Activated T-helper 2 cell treated with anti-CD3 and anti-CD28 coated beads, Interferon-gamma antibody, Interleukin-2, Interleukin-4, amounts not matched to agents 10 μg/mL and 5 μg/mL and 100 μg/mL, durations not matched to agents 14 hours and 24 hours and 36 hours (primary cell): ENCODE measurements at regions of chr17 and their contacts with region 1.

Region 1: GRCh38 chr17:14203388-14203787 is 33.3 kb downstream of the CDRT15 start:
- DNase-seq: peak; percentile 24
- H3K4me3 Mint-ChIP-seq: peak overlapping the region; percentile 35
- H3K27ac Mint-ChIP-seq: peak overlapping the region; percentile 83
- H3K4me1 Mint-ChIP-seq: peaks cover 80% of the 10 kb centered on the region
- H3K27me3 Mint-ChIP-seq: no peaks in the 10 kb centered on the region

Region 2: DNA sequence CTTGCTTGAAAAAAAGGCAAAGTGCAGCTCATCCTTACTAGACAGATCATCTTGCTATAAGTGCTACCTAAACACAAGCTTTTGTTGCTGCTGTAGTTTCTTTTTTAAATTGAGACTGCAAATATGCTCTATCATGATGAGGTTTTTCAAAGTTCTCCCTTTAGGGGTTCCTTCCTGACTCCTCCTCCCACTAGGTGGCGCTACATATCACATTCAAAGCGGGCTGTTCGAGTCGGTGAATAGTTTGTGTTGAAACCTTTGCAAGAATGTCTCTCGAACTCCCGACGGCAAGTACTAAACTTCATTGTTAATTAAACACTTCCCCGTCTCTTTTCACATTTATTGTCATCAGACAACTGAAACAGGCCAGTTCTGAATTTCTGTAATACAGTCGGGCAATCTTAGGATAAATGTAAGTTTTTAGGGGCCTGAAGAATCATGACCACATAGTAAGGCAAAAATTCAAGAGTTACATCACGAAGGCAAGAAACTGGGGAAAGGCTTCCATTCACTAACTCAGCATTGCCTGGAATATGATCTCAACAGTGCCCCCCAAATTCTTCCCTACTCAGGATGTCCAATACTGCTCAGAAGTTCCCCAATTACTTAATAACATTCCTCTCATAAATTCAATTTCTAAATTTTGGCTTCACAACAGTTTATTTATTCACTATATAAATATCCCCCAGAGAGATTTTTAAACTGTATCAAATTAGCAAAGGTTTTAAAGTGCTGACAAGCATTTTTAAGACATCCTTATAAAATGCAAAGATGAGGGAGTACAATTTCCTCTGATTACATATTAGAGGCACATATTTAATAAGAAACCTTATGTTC is 608.4 kb before region 1 on chr17:
- intact Hi-C with region 1: loop called (anchors 5 kb)
- DNase-seq: peak; percentile 66
- H3K4me3 Mint-ChIP-seq: no peak overlapping the region
- H3K27ac Mint-ChIP-seq: no peak overlapping the region
- H3K4me1 Mint-ChIP-seq: peaks cover 8% of the 10 kb centered on the region
- H3K27me3 Mint-ChIP-seq: peaks cover 52% of the 10 kb centered on the region

Region 3: GRCh38 chr17:14042411-14042810 is 161.0 kb before region 1 on chr17:
- intact Hi-C with region 1: loop called (anchors 1 kb)
- DNase-seq: no peak
- H3K4me3 Mint-ChIP-seq: no peak overlapping the region
- H3K27ac Mint-ChIP-seq: no peak overlapping the region
- H3K4me1 Mint-ChIP-seq: peaks cover 50% of the 10 kb centered on the region
- H3K27me3 Mint-ChIP-seq: no peaks in the 10 kb centered on the region

Region 4: GRCh38 chr17:14069251-14070021 is 134.0 kb before region 1 on chr17 and contains the start of gene COX10:
- intact Hi-C with region 1: loop called (anchors 2 kb)
- DNase-seq: peak; percentile 80
- H3K4me3 Mint-ChIP-seq: peak within 1 kb of the TSS; percentile 96
- H3K27ac Mint-ChIP-seq: peak within 1 kb of the TSS; percentile 94
- H3K4me1 Mint-ChIP-seq: peaks cover 45% of the 10 kb centered on the region
- H3K27me3 Mint-ChIP-seq: no peaks in the 10 kb centered on the region
- total RNA-seq, gene COX10: 24.9 and 28.1 TPM in 2 replicates

Region 5: DNA sequence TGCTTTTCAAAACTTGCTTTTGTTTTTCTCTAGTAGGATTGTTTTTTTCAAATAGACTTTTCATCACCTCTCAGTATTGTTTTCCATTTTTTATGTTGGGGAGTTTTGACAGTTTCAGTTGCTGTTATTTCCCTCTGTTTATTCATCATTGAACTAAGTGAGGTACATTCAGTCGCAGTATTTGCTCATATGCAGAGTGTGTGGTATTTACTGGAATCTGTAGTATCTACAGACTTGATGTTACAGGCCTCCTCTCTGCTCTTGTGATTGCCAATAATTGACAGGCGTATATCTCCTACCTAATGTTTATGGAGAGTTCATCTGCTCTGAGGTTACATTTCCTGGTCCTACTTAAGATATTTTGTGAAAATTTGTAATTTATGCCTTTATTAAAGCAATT is 84.4 kb before region 1 on chr17:
- intact Hi-C with region 1: loop called (anchors 1 kb)
- DNase-seq: no peak
- H3K4me3 Mint-ChIP-seq: peak overlapping the region; percentile 59
- H3K27ac Mint-ChIP-seq: peak overlapping the region; percentile 92
- H3K4me1 Mint-ChIP-seq: peaks cover 78% of the 10 kb centered on the region
- H3K27me3 Mint-ChIP-seq: no peaks in the 10 kb centered on the region

Region 6: GRCh38 chr17:14156689-14157088 is 46.7 kb before region 1 on chr17:
- intact Hi-C with region 1: no loop called
- DNase-seq: no peak
- H3K4me3 Mint-ChIP-seq: no peak overlapping the region
- H3K27ac Mint-ChIP-seq: no peak overlapping the region
- H3K4me1 Mint-ChIP-seq: peaks cover 27% of the 10 kb centered on the region
- H3K27me3 Mint-ChIP-seq: no peaks in the 10 kb centered on the region

Region 7: GRCh38 chr17:14276535-14277250 is 73.3 kb after region 1 on chr17:
- intact Hi-C with region 1: no loop called
- DNase-seq: no peak
- H3K4me3 Mint-ChIP-seq: no peak overlapping the region
- H3K27ac Mint-ChIP-seq: no peak overlapping the region
- H3K4me1 Mint-ChIP-seq: no peaks in the 10 kb centered on the region
- H3K27me3 Mint-ChIP-seq: peaks cover 37% of the 10 kb centered on the region

Region 8: GRCh38 chr17:14346801-14347200 is 143.4 kb after region 1 on chr17:
- intact Hi-C with region 1: no loop called
- DNase-seq: no peak
- H3K4me3 Mint-ChIP-seq: no peak overlapping the region
- H3K27ac Mint-ChIP-seq: no peak overlapping the region
- H3K4me1 Mint-ChIP-seq: peaks cover 6% of the 10 kb centered on the region
- H3K27me3 Mint-ChIP-seq: no peaks in the 10 kb centered on the region

Region 9: GRCh38 chr17:14427900-14428647 is 224.7 kb after region 1 on chr17:
- intact Hi-C with region 1: loop called (anchors 10 kb)
- DNase-seq: peak; percentile 28
- H3K4me3 Mint-ChIP-seq: peak overlapping the region; percentile 54
- H3K27ac Mint-ChIP-seq: peak overlapping the region; percentile 82
- H3K4me1 Mint-ChIP-seq: peaks cover 32% of the 10 kb centered on the region
- H3K27me3 Mint-ChIP-seq: no peaks in the 10 kb centered on the region